HCT116 (cell line): ENCODE measurements at regions of chr17 and their contacts with region 1.

Region 1: GRCh38 chr17:51056813-51057510 is 63.7 kb downstream of the SPAG9 start:
- DNase-seq: peak; percentile 32
- ATAC-seq: peak; percentile 87
- H3K4me3 ChIP-seq: no peak overlapping the region
- H3K27ac ChIP-seq: no peak overlapping the region
- H3K4me1 ChIP-seq: peaks cover 4 to 25% of the 10 kb centered on the region in 2 experiments; a peak in 3 of 4 replicates
- H3K27me3 ChIP-seq: no peaks in the 10 kb centered on the region
- CTCF ChIP-seq: peak; percentile 50 to 73 (median 73); a peak in 5 of 6 replicates
- POLR2A ChIP-seq: no peak
- RAD21 ChIP-seq: peak; percentile 72

Region 2: GRCh38 chr17:51000835-51001638 is 55.9 kb before region 1 on chr17:
- CTCF ChIA-PET with region 1: interaction called, 13 read pairs
- POLR2A ChIA-PET with region 1: no interaction called
- RAD21 ChIA-PET with region 1: no interaction called
- intact Hi-C with region 1: loop called (anchors 2 kb)
- DNase-seq: peak; percentile 61
- ATAC-seq: peak; percentile 87
- H3K4me3 ChIP-seq: no peak overlapping the region
- H3K27ac ChIP-seq: no peak overlapping the region
- H3K4me1 ChIP-seq: no peaks in the 10 kb centered on the region
- H3K27me3 ChIP-seq: no peaks in the 10 kb centered on the region
- CTCF ChIP-seq: peak; percentile 34 to 89 (median 82); a peak in 5 of 6 replicates
- POLR2A ChIP-seq: no peak
- RAD21 ChIP-seq: peak; percentile 88

Region 3: DNA sequence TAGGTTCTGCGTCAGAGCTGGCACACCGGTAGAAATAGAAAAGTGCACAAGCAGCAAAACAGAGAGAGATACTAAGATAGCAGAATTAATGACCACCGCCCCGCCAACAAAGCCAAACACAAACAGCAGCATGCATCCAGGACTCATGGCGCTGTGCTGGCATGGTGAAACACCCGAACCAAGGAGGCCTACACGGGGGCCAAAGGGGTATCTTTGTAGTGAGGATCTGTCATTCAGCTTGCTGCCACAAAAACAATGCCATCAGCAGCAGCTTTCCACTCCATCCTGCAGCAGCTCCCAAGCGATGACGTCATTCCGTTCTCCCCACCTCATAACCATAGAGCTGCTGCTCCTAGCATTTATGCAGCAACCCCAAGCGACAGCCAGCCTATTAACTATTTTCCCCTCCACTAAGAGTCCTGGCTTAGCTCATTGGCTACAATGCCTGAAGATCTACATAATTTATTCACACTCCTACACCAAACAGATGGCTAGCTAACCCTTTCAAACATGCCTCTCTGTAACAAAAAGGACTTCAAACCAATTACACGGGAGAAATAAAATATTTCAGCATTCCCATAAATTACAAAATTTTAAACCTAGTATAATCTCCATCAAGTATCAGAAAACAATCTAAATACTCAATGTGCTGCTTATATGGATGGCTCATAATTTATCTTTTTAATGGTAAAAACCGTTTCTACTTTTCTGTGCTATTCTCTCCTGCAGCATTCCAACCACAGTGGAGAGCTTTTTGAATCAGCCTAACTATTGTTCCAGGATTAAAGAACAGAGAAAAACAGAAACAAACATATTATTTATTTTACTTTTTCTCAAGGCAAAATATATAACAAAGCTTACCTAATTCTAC is 10.2 kb before region 1 on chr17:
- CTCF ChIA-PET with region 1: interaction called, 35 read pairs
- POLR2A ChIA-PET with region 1: interaction called, 4 read pairs
- RAD21 ChIA-PET with region 1: no interaction called
- intact Hi-C with region 1: no loop called
- DNase-seq: no peak
- ATAC-seq: peak; percentile 47; the same call in 1 of the 2 replicates
- H3K4me3 ChIP-seq: no peak overlapping the region
- H3K27ac ChIP-seq: no peak overlapping the region
- H3K4me1 ChIP-seq: no peaks in the 10 kb centered on the region
- H3K27me3 ChIP-seq: no peaks in the 10 kb centered on the region
- CTCF ChIP-seq: no peak
- POLR2A ChIP-seq: no peak
- RAD21 ChIP-seq: no peak

Region 4: DNA sequence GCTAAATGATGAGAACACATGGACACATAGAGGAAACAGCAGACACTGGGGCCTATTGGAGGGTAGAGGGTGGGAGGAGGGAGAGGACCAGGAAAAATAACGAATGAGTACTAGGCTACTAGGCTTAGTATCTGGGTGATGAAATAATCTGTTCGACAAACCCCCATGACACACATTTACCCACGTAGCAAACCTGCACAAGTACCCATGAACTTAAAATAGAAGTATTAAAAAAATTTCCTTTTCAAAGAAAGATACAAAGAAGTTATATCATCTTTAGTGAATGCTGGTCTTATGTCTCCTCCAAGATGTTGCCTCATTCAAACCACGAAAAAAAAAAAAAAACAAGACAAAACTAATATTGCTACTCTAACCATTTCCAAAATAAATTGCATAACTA is 171.2 kb after region 1 on chr17:
- CTCF ChIA-PET with region 1: no interaction called
- POLR2A ChIA-PET with region 1: no interaction called
- RAD21 ChIA-PET with region 1: no interaction called
- intact Hi-C with region 1: no loop called
- DNase-seq: no peak
- ATAC-seq: no peak
- H3K4me3 ChIP-seq: no peak overlapping the region
- H3K27ac ChIP-seq: no peak overlapping the region
- H3K4me1 ChIP-seq: peaks cover 20 to 33% of the 10 kb centered on the region in 2 experiments
- H3K27me3 ChIP-seq: no peaks in the 10 kb centered on the region
- CTCF ChIP-seq: no peak
- POLR2A ChIP-seq: no peak
- RAD21 ChIP-seq: no peak